ENCODE measurements at regions of chr11 and their contacts with region 1.

Region 1: GRCh38 chr11:518463-519250 is 11.6 kb upstream of the RNH1 start:
- DNase-seq: peak; percentile 97
- H3K4me3 ChIP-seq: no peak overlapping the region
- H3K27ac ChIP-seq: peak overlapping the region; percentile 36
- H3K4me1 ChIP-seq: peaks cover 3% of the 10 kb centered on the region
- H3K27me3 ChIP-seq: no peaks in the 10 kb centered on the region
- CTCF ChIP-seq: peak; percentile 91 to 100
- POLR2A ChIP-seq: no peak

Region 2: DNA sequence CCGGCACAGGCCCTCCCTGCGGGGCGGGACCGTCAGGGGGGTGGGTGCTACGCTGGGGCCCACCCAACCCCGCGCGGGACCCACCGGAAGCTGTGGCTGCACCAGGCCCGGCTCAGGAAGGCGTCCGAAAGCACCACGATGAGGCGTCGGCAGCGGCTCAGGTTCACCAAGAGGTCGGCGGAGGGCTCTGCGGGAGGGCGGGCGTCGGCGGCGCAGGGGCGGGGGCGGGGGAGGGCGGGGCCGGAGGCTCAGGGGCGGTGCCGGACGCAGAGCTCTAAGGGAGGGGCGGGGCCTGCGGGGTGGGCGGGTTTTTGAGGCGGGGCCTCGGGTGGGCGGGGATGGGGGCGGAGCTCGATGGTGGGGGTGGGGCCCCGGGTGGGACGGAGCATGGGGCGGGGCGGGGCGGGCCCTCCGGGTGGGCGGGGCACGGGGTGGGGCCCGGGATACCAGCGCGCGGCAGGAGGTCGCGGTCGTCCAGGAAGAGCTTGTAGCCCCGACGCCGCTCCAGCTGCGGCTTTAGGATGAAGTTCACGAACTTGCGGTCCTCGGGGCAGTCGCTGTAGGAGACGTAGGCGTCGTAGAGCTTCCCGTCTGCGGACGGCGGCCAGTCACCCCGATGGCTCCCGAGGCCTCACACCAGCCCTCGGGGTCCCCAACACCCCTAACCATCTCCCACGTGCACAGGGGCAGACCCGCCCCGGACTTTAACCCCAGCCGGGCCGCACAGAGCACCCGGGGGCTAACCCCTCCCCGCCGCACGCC is 111.5 kb before region 1 on chr11:
- CTCF ChIA-PET with region 1: no interaction called
- POLR2A ChIA-PET with region 1: no interaction called
- dilution Hi-C with region 1: no loop called
- intact Hi-C with region 1: loop called (anchors 1 kb)
- DNase-seq: peak; percentile 46
- H3K4me3 ChIP-seq: peak overlapping the region; percentile 42 to 51 (median 47)
- H3K27ac ChIP-seq: peak overlapping the region; percentile 38
- H3K4me1 ChIP-seq: peaks cover 5% of the 10 kb centered on the region
- H3K27me3 ChIP-seq: no peaks in the 10 kb centered on the region
- CTCF ChIP-seq: no peak
- POLR2A ChIP-seq: peak; percentile 23

Region 3: DNA sequence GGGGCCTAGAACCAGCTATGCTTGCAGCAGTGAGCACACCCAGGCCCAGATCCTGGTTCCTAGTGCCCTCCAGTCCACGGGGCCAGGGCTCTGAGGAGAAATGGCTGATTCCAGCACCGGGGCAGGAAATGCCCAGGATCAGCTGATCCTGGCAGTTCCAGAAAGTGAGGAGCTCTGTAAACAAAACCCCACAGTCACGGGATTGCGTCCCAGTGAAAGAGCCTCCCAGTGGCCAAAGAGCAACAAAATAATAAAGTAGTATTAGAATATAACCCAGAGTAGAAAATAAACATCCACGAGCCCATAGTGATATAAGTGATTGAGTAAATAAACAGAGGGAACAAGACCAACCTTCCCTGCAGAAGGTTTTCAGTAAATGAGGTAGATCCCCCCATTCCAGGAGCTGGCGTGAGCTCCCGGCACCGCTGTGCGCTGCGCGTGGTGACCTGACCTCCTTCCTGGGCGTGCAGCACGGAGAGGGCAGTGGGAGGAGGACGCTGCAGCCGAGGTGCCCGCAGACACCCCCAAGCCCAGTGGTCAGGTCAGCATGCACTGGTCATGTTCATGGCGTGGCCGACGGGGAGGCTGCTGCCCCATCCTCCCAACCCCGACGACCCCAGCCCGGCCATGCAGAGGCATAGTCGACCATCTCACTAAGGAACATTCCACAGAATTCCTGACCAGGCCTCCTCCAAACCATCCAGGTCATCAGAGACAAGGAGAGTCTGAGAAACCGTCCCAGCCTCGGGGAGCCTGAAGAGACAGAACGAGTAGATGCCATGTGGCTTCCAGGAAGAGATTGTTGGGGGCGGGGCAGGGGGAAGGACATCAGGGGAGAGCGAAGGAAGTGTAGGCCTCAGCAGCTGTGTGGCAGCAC is 48.7 kb before region 1 on chr11:
- CTCF ChIA-PET with region 1: no interaction called
- POLR2A ChIA-PET with region 1: no interaction called
- dilution Hi-C with region 1: no loop called
- intact Hi-C with region 1: loop called (anchors 1 kb)
- DNase-seq: peak; percentile 90
- H3K4me3 ChIP-seq: no peak overlapping the region
- H3K27ac ChIP-seq: peak overlapping the region; percentile 18
- H3K4me1 ChIP-seq: peaks cover 10% of the 10 kb centered on the region
- H3K27me3 ChIP-seq: no peaks in the 10 kb centered on the region
- CTCF ChIP-seq: peak in 1 of 2 donors; percentile 11
- POLR2A ChIP-seq: peak; percentile 30

Region 4: GRCh38 chr11:506238-506994 is 12.2 kb before region 1 on chr11:
- CTCF ChIA-PET with region 1: interaction called, 6 read pairs
- POLR2A ChIA-PET with region 1: no interaction called
- dilution Hi-C with region 1: no loop called
- intact Hi-C with region 1: loop called (anchors 1 kb)
- DNase-seq: peak; percentile 98
- H3K4me3 ChIP-seq: peak overlapping the region; percentile 69 to 81 (median 79)
- H3K27ac ChIP-seq: peak overlapping the region; percentile 99
- H3K4me1 ChIP-seq: peaks cover 24% of the 10 kb centered on the region
- H3K27me3 ChIP-seq: no peaks in the 10 kb centered on the region
- CTCF ChIP-seq: no peak
- POLR2A ChIP-seq: peak; percentile 53

Region 5: GRCh38 chr11:535519-536454 is 17.1 kb after region 1 on chr11 and contains the start of gene HRAS:
- CTCF ChIA-PET with region 1: no interaction called
- POLR2A ChIA-PET with region 1: no interaction called
- dilution Hi-C with region 1: no loop called
- intact Hi-C with region 1: loop called (anchors 2 kb)
- DNase-seq: peak; percentile 94
- H3K4me3 ChIP-seq: peak within 1 kb of the TSS; percentile 54 to 74 (median 69)
- H3K27ac ChIP-seq: no peak within 1 kb of the TSS
- H3K4me1 ChIP-seq: peaks cover 7% of the 10 kb centered on the region
- H3K27me3 ChIP-seq: no peaks in the 10 kb centered on the region
- CTCF ChIP-seq: no peak
- POLR2A ChIP-seq: peak; percentile 87
- total RNA-seq, gene HRAS: 103 TPM in 2 replicates

Region 6: GRCh38 chr11:848380-848931 is 329.8 kb after region 1 on chr11:
- CTCF ChIA-PET with region 1: no interaction called
- POLR2A ChIA-PET with region 1: no interaction called
- dilution Hi-C with region 1: no loop called
- intact Hi-C with region 1: no loop called
- DNase-seq: peak; percentile 32
- H3K4me3 ChIP-seq: no peak overlapping the region
- H3K27ac ChIP-seq: no peak overlapping the region
- H3K4me1 ChIP-seq: peaks cover 26% of the 10 kb centered on the region
- H3K27me3 ChIP-seq: no peaks in the 10 kb centered on the region
- CTCF ChIP-seq: peak; percentile 81 to 94
- POLR2A ChIP-seq: no peak